Head of caudate nucleus (tissue), 42 donors: ENCODE measurements at regions of chr3 and their contacts with region 1.

Region 1: DNA sequence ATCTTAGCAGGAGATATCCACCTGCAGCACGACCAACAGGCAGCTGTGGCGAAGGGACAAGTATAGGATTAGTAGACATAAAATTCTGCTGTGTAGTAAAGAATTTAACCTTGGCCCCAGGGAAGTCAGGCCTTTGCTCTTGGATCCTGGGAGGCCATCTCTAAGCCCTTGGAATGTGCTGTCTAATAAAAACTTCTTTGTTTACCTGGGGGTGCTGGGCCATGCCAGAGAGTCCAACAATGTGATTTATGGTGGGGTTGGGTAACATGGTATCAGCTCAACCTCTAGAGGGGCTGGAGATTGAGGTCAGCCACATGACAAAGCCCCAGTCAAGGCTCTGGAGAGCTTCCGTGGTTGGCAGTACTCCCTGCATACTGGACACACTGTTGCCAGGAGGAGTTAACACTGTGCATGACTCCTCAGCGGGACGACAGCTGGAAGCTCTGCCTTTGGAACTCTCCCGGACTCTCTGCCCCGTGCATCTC is 52.4 kb downstream of the HEG1 start:
- DNase-seq: peak in 25 of 42 donors; percentile 16 to 59 (median 32)

Region 2: GRCh38 chr3:125137352-125138033 is 134.1 kb after region 1 on chr3:
- intact Hi-C with region 1: loop called (anchors 10 kb)
- DNase-seq: no peak